Heart right ventricle (tissue), 16 donors: ENCODE measurements at regions of chr11 and their contacts with region 1.

Region 1: DNA sequence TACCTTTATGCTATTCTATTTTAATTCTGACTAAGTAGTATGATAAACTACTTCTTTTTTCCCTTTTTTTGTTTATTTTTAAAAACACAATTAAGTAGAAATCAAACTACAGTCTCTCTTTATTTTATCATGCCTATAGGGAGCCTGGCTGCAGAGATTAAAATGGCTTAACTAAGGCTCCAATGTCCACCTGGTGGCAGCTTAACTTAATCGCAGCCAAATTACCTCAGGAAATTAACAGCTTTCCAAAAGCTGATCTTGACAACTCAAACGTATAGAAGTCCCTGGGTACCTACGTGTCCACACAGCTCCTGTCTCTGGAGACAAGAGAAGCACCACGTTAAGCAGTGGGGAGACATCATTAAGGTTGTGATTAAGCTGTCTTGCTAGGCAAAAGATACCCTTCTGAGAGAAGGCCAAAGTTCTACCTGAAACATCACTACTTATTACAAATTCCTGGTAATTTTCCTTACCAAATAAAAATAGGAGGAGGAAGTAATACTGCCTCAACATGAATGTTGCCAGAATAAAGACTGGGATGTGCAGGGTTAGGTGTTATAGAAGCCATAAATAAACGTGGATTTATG is 63.2 kb upstream of the SNX19 start:
- DNase-seq: no peak
- ATAC-seq: no peak
- H3K4me3 ChIP-seq: no peak overlapping the region
- H3K27ac ChIP-seq: no peak overlapping the region
- H3K4me1 ChIP-seq: no peaks in the 10 kb centered on the region
- H3K27me3 ChIP-seq: peaks cover 0 to 8% (median 0%) of the 10 kb centered on the region in 7 donors
- CTCF ChIP-seq: peak in 8 of 9 donors; percentile 8 to 59 (median 45)

Region 2: GRCh38 chr11:130861902-130862860 is 117.3 kb before region 1 on chr11:
- intact Hi-C with region 1: no loop called
- DNase-seq: peak; percentile 89 to 91
- ATAC-seq: peak; percentile 50 to 79 (median 68)
- H3K4me3 ChIP-seq: peak overlapping the region in 1 of 10 donors; percentile 23
- H3K27ac ChIP-seq: peak overlapping the region in 3 of 10 donors; percentile 4 to 53 (median 51)
- H3K4me1 ChIP-seq: peaks cover 0 to 36% (median 16%) of the 10 kb centered on the region in 9 donors
- H3K27me3 ChIP-seq: no peaks in the 10 kb centered on the region
- CTCF ChIP-seq: peak; percentile 100

Region 3: DNA sequence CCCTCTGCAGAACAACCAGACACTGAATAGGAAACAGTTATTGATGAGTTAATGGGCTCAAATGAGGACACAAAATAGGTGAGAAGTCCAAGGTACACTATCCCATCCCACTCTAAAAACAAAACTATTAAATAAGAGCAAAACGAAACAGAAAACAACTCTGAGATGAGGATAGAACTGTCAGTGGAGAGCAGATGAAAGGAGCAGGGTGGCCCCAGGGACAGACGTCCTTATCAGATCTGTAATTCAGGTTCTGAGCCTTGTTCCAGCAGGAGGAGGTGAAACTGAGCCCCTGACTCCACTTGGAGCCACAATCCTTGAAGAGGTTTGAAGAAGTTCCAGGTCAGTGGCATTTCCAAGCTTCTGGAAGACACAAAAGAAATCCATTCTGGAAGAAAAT is 54.7 kb before region 1 on chr11:
- intact Hi-C with region 1: loop called in 5 of 10 experiments (anchors 2 to 5 kb)
- DNase-seq: no peak
- ATAC-seq: no peak
- H3K4me3 ChIP-seq: no peak overlapping the region
- H3K27ac ChIP-seq: no peak overlapping the region
- H3K4me1 ChIP-seq: no peaks in the 10 kb centered on the region
- H3K27me3 ChIP-seq: peaks cover 0 to 7% (median 0%) of the 10 kb centered on the region in 7 donors
- CTCF ChIP-seq: no peak